ENCODE measurements at regions of chr14 and their contacts with region 1.

Region 1: GRCh38 chr14:29536886-29537511 is 390.6 kb downstream of the PRKD1 start:
- H3K4me3 Mint-ChIP-seq: no peak overlapping the region
- H3K27ac Mint-ChIP-seq: no peak overlapping the region
- H3K4me1 Mint-ChIP-seq: no peaks in the 10 kb centered on the region
- H3K27me3 Mint-ChIP-seq: no peaks in the 10 kb centered on the region

Region 2: DNA sequence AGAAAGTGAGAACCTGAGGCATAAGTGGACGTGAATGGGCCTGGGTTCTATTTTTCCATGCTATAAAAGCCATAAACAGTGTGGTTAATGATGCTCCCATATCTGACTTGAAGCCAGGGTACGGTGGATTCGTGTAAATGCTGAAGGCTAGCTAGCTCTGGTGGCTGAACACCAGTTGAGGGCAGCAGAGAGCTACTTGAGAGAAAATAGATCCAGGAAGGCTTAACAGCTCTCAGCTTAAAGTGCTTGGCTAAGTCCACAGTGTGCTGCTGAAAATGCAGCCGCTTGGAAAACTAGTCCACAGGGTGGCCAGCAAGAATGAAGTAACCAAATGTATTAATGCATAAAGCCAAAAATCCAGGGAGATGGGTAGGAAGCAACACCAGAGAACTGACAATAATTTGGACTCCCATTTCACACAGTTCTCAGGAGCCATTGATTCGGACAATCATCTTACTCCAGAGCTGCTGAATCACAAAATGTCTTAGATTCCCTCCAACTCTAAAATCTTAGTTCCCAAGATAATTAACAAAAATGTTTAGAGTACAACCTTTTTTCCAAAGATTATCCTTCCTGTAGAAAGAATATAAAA is 785.4 kb before region 1 on chr14:
- intact Hi-C with region 1: loop called (anchors 5 kb)
- H3K4me3 Mint-ChIP-seq: no peak overlapping the region
- H3K27ac Mint-ChIP-seq: no peak overlapping the region
- H3K4me1 Mint-ChIP-seq: no peaks in the 10 kb centered on the region
- H3K27me3 Mint-ChIP-seq: peaks cover 30% of the 10 kb centered on the region

Measured in dendritic cell treated with granulocyte-macrophage colony-stimulating factor and Interleukin-4, amounts not matched to agents 40 ng/mL and 50 ng/mL, for 4 days (primary cell).